ENCODE measurements at regions of chr2 and their contacts with region 1.

Region 1: GRCh38 chr2:216404010-216404618 is 8.2 kb upstream of the SMARCAL1 start:
- DNase-seq: no peak
- H3K4me3 ChIP-seq: no peak overlapping the region
- H3K27ac ChIP-seq: no peak overlapping the region
- H3K27me3 ChIP-seq: peaks cover 2% of the 10 kb centered on the region
- CTCF ChIP-seq: peak; percentile 84

Region 2: DNA sequence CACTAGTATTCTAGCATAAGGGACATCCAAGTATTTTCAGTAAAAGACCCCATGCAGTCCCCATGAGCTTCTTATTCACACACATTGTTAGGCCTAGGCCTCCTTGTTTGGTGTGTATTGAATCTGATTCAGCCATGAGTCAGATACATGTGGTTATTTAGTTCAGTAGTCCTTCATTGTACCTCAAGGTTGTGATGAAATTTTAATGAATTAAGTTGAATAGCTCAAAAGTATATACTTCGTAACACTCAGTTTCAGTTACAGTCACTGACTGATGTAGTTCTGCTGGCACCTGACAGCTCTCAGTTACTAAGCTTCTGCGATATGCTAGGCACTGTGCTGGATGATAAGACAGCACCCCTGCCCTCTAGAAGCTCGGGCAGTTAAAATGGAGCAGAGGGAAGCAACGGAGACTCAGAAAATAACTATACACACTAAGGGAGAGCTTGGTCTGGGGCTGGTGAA is 208.5 kb before region 1 on chr2:
- CTCF ChIA-PET with region 1: interaction called, 11 read pairs
- POLR2A ChIA-PET with region 1: no interaction called
- DNase-seq: peak; percentile 57
- H3K4me3 ChIP-seq: no peak overlapping the region
- H3K27ac ChIP-seq: peak overlapping the region; percentile 67
- H3K27me3 ChIP-seq: no peaks in the 10 kb centered on the region
- CTCF ChIP-seq: no peak

Region 3: DNA sequence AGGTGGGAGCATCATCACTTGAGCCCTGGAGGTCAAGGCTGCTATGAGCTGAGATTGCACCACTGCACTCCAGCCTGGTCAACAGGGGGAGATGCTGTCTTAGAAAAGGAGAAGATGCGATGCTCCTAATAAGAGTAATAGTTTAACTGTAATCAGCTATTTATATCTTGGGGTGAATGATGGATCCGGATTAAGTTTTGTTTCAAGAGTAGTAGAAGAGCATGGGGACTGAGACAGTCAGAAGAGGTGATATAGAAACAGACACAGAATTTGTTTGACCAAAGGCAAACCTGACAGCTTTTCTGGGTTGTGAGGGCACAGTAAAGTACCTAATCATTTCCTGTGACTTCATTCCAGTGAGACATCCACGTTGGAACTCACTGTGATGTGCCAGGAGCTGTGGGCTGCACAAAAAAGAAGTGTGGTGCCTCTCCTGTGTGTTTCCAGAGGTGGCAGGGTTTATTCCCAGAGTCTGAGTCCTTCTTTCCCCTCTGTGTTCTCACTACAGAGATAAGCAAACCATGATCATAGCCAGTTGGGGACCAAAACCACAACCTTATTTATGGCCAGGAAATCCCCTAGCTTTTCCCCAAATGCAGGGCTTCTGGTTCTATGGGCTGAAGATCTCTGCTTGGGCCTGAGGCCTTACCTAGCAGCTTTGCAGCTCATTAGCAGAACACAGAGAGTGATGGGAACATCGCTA is 181.3 kb before region 1 on chr2:
- CTCF ChIA-PET with region 1: interaction called, 38 read pairs
- POLR2A ChIA-PET with region 1: no interaction called
- DNase-seq: no peak
- H3K4me3 ChIP-seq: no peak overlapping the region
- H3K27ac ChIP-seq: no peak overlapping the region
- H3K27me3 ChIP-seq: no peaks in the 10 kb centered on the region
- CTCF ChIP-seq: peak; percentile 55

Region 4: DNA sequence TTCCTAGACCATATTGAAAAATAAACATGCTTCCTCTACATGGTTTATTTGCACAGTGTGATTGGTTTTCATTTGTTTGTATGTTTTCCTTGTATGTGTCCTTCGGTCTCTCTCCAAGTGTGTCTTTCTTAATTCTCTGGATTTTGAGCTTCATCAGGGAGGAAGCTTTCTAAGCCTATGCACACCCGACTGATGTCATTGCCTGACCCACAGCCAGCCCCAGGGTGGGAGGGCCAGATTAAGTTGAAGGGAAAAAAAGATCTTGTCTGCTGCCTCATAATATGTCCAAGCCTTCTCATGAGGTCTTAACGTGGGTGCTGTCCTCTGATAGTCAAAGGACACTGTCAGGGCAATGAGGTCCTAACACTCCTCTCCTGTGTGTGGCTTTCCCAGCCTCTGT is 147.0 kb before region 1 on chr2:
- CTCF ChIA-PET with region 1: no interaction called
- POLR2A ChIA-PET with region 1: no interaction called
- DNase-seq: no peak
- H3K4me3 ChIP-seq: no peak overlapping the region
- H3K27ac ChIP-seq: no peak overlapping the region
- H3K27me3 ChIP-seq: no peaks in the 10 kb centered on the region
- CTCF ChIP-seq: no peak

Region 5: DNA sequence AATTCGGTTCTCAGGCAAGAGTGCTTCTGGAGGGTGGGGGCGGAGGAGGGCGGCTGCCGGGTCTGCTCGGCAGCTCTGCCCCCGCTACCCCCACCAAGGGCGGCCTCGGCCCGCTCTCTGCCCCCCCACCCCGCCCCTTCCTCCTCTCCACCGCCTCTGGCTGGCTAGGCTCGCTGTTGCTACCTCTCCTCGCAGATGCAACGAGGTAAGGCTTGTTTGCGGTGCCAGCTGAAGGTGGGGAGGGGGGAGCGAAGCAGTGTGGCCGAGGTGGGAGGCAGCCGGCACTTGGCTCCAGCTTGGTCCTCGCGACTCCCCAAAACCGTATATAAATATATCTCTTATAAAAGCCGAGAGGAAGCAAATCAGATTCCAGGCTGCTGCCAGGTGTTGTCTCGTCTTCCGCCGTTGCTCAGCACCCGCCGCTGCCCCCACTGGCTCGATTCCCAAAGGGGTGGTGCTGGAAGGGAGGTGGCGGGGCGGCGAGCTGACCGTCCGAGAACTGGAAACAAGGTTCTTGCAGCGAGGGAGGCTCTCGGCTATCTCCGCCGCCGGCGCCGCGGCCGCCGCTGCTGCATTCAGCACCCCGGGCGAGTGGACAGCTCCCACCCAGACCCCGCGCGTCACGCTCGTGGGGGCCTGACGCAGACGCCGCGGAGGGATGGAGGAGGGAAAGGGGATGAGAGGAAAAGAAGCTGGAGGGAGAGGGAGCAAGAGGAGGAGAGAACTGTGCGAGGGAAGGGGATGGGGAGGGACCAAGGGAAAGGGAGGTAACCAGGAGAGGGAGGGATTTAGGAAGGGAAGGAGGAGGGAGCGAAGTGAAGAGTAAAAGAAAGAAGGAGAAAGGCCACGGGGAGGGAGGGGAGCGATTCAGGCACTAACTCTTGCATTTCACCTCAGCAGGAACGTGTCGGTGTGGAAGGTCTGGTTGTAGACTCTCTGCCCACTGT is 32.1 kb before region 1 on chr2 and contains the start of gene MARCHF4:
- CTCF ChIA-PET with region 1: interaction called, 24 read pairs
- POLR2A ChIA-PET with region 1: no interaction called
- DNase-seq: peak; percentile 60
- H3K4me3 ChIP-seq: peak within 1 kb of the TSS; percentile 81
- H3K27ac ChIP-seq: peak within 1 kb of the TSS; percentile 96
- H3K27me3 ChIP-seq: no peaks in the 10 kb centered on the region
- CTCF ChIP-seq: no peak
- polyA plus RNA-seq, gene MARCHF4: 3.8 and 4.3 TPM in 2 replicates

Region 6: GRCh38 chr2:216426938-216427337 is 22.8 kb after region 1 on chr2:
- CTCF ChIA-PET with region 1: no interaction called
- POLR2A ChIA-PET with region 1: no interaction called
- DNase-seq: no peak
- H3K4me3 ChIP-seq: no peak overlapping the region
- H3K27ac ChIP-seq: no peak overlapping the region
- H3K27me3 ChIP-seq: no peaks in the 10 kb centered on the region
- CTCF ChIP-seq: no peak

Region 7: DNA sequence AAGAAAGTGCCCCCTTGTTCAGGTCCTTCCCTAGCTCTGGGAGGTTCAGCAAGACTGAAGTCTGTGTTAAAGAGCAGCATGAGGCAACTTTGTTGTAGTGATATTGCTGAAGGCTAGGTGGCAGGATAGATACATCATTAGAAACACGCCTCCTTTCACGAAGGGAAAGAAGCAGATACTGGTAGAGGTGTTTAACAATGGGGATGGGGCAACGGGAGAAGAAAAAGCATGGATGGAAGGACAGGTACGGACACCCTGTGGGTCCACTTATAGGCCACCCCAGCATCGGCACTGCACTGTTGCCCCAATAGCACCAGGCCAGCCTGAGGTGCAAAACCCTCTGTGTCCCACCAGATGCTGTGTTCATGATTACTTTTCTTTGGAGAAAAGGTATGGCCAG is 294.8 kb after region 1 on chr2:
- CTCF ChIA-PET with region 1: no interaction called
- POLR2A ChIA-PET with region 1: no interaction called
- DNase-seq: no peak
- H3K4me3 ChIP-seq: no peak overlapping the region
- H3K27ac ChIP-seq: no peak overlapping the region
- H3K27me3 ChIP-seq: no peaks in the 10 kb centered on the region
- CTCF ChIP-seq: peak; percentile 78

Region 8: GRCh38 chr2:217353591-217353990 is 949.5 kb after region 1 on chr2:
- CTCF ChIA-PET with region 1: no interaction called
- POLR2A ChIA-PET with region 1: no interaction called
- DNase-seq: no peak
- H3K4me3 ChIP-seq: no peak overlapping the region
- H3K27ac ChIP-seq: no peak overlapping the region
- H3K27me3 ChIP-seq: no peaks in the 10 kb centered on the region
- CTCF ChIP-seq: no peak

Measured in AG04450 (cell line).